ENCODE measurements at regions of chr17 and their contacts with region 1.

Region 1: DNA sequence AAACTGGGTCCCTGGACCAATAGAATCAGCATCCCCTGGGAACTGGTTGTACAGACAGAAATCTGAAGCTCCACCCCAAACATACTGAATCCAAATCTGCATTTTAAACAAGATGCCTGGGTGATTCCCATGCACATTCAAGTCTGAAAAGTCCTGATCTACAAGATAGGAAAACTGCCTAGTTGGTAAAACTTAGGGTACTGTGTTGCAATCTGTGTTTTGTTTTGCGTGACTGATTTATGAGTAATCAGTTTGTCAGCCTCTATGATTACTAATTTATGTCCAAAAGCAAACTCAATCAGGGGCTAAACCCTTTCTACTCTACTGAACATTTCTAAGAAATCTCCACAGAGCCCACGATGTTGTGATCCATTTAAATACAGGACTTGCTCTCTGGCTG is 103.8 kb downstream of the YPEL2 start:
- DNase-seq: peak; percentile 63 to 90 (median 88)
- H3K4me3 ChIP-seq: peak overlapping the region in 1 of 3 experiments; percentile 13
- H3K4me3 Mint-ChIP-seq: peak overlapping the region in 1 of 2 donors; percentile 71
- H3K27ac ChIP-seq: peak overlapping the region in 1 of 2 donors; percentile 72
- H3K27ac Mint-ChIP-seq: peak overlapping the region; percentile 66 to 91 (median 84)
- H3K4me1 ChIP-seq: peaks cover 71 to 73% of the 10 kb centered on the region in 2 donors
- H3K4me1 Mint-ChIP-seq: peaks cover 70% of the 10 kb centered on the region
- H3K27me3 ChIP-seq: no peaks in the 10 kb centered on the region
- H3K27me3 Mint-ChIP-seq: peaks cover 2 to 6% (median 2%) of the 10 kb centered on the region in 3 donors
- CTCF ChIP-seq: no peak

Region 2: GRCh38 chr17:59372138-59372857 is 62.9 kb before region 1 on chr17:
- intact Hi-C with region 1: loop called (anchors 5 kb)
- DNase-seq: peak; percentile 55 to 70 (median 67)
- H3K4me3 ChIP-seq: peak overlapping the region in 2 of 3 experiments; percentile 39 to 45
- H3K4me3 Mint-ChIP-seq: peak overlapping the region; percentile 55 to 76
- H3K27ac ChIP-seq: peak overlapping the region; percentile 85 to 95
- H3K27ac Mint-ChIP-seq: peak overlapping the region; percentile 94 to 99 (median 97)
- H3K4me1 ChIP-seq: peaks cover 63 to 79% of the 10 kb centered on the region in 2 donors
- H3K4me1 Mint-ChIP-seq: peaks cover 84% of the 10 kb centered on the region
- H3K27me3 ChIP-seq: no peaks in the 10 kb centered on the region
- H3K27me3 Mint-ChIP-seq: peaks cover 0 to 4% (median 0%) of the 10 kb centered on the region in 3 donors
- CTCF ChIP-seq: no peak

Region 3: DNA sequence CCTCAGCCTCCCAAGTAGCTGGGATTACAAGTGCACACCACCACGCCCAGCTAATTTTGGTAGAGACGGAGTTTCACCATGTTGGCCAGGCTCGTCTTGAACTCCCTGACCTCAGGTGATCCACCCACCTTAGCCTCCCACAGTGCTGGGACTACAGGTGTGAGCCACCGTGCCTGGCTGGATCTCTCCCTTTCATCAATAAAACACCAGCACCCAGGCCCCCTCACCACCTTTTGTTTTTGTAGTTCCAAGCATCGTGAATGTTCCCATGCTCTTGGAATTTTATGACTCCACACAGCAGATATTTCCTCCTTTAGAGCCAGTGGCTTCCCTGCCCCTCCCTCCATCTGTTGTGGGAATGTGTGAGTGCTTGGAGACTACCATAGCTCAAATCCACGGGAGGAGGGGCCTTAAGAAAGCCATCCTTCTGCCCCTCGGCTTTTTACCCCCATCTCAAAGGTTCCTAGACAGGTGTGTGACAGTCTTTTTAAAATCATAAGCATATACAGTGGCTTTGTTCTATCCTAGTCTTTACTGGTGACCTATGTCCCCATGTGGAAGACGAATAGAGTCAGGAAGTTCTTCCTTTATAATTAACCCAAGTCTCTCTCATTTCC is 56.7 kb before region 1 on chr17:
- intact Hi-C with region 1: loop called (anchors 5 kb)
- DNase-seq: no peak
- H3K4me3 ChIP-seq: no peak overlapping the region
- H3K4me3 Mint-ChIP-seq: no peak overlapping the region
- H3K27ac ChIP-seq: no peak overlapping the region
- H3K27ac Mint-ChIP-seq: peak overlapping the region in 2 of 7 donors; percentile 50 to 72
- H3K4me1 ChIP-seq: peaks cover 28% of the 10 kb centered on the region in 2 donors
- H3K4me1 Mint-ChIP-seq: peaks cover 45% of the 10 kb centered on the region
- H3K27me3 ChIP-seq: no peaks in the 10 kb centered on the region
- H3K27me3 Mint-ChIP-seq: peaks cover 0 to 4% (median 0%) of the 10 kb centered on the region in 3 donors
- CTCF ChIP-seq: no peak

Region 4: GRCh38 chr17:59423137-59423703 is 12.0 kb before region 1 on chr17:
- intact Hi-C with region 1: no loop called
- DNase-seq: no peak
- H3K4me3 ChIP-seq: no peak overlapping the region
- H3K4me3 Mint-ChIP-seq: no peak overlapping the region
- H3K27ac ChIP-seq: no peak overlapping the region
- H3K27ac Mint-ChIP-seq: no peak overlapping the region
- H3K4me1 ChIP-seq: peaks cover 0 to 9% of the 10 kb centered on the region in 2 donors
- H3K4me1 Mint-ChIP-seq: peaks cover 19% of the 10 kb centered on the region
- H3K27me3 ChIP-seq: no peaks in the 10 kb centered on the region
- H3K27me3 Mint-ChIP-seq: peaks cover 0 to 3% (median 2%) of the 10 kb centered on the region in 3 donors
- CTCF ChIP-seq: no peak

Region 5: DNA sequence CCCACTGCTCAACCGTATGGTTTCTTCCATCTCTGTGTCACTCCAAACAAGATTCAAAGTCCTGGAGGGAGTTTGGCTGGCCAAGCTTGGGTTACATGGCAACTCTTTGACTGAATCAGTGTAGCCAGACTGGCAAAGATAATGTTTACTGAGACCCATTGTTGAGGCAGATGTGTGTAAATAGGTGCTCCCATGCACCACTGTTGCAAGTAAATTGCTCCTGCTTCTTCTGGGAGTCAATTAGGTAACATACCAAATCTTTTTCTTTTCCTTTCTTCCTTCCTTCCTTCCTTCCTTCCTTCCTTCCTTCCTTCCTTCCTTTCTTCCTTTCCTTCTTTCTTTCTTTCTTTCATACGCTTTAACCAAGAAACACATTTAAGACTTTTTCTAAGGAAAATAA is 43.9 kb after region 1 on chr17:
- intact Hi-C with region 1: no loop called
- DNase-seq: no peak
- H3K4me3 ChIP-seq: no peak overlapping the region
- H3K4me3 Mint-ChIP-seq: no peak overlapping the region
- H3K27ac ChIP-seq: no peak overlapping the region
- H3K27ac Mint-ChIP-seq: peak overlapping the region in 1 of 7 donors; percentile 13
- H3K4me1 ChIP-seq: peaks cover 0 to 6% of the 10 kb centered on the region in 2 donors
- H3K4me1 Mint-ChIP-seq: peaks cover 3% of the 10 kb centered on the region
- H3K27me3 ChIP-seq: no peaks in the 10 kb centered on the region
- H3K27me3 Mint-ChIP-seq: peaks cover 0 to 2% (median 0%) of the 10 kb centered on the region in 3 donors
- CTCF ChIP-seq: no peak

Measured in CD14-positive monocyte (primary cell).